Naive thymus-derived CD8-positive, alpha-beta T cell (primary cell): ENCODE measurements at regions of chr5 and their contacts with region 1.

Region 1: GRCh38 chr5:151223469-151224264 is at the start of gene CCDC69:
- DNase-seq: peak in 8 of 10 donors; percentile 26 to 69 (median 51)
- ATAC-seq: peak; percentile 64
- H3K4me3 Mint-ChIP-seq: peak within 1 kb of the TSS; percentile 82 to 96 (median 94)
- H3K27ac Mint-ChIP-seq: peak within 1 kb of the TSS; percentile 93 to 100 (median 96)
- H3K4me1 Mint-ChIP-seq: peaks cover 38 to 71% (median 57%) of the 10 kb centered on the region in 4 donors
- H3K27me3 Mint-ChIP-seq: no peaks in the 10 kb centered on the region
- polyA plus RNA-seq, gene CCDC69: 79.8 to 130 (median 98.1) TPM

Region 2: GRCh38 chr5:150700594-150701293 is 522.9 kb before region 1 on chr5 and contains the start of gene RBM22:
- POLR2A ChIA-PET with region 1: interaction called, 12 read pairs
- DNase-seq: peak; percentile 84 to 96 (median 92)
- ATAC-seq: peak; percentile 93 to 94
- H3K4me3 Mint-ChIP-seq: no peak within 1 kb of the TSS
- H3K27ac Mint-ChIP-seq: no peak within 1 kb of the TSS
- H3K4me1 Mint-ChIP-seq: peaks cover 0 to 7% (median under 1%) of the 10 kb centered on the region in 4 donors
- H3K27me3 Mint-ChIP-seq: no peaks in the 10 kb centered on the region
- polyA plus RNA-seq, gene RBM22: 51.4 to 57.0 (median 56.2) TPM

Region 3: GRCh38 chr5:151171529-151171928 is 52.1 kb before region 1 on chr5:
- POLR2A ChIA-PET with region 1: interaction called, 17 read pairs
- DNase-seq: no peak
- ATAC-seq: peak in 1 of 2 donors; percentile 17
- H3K4me3 Mint-ChIP-seq: no peak overlapping the region
- H3K27ac Mint-ChIP-seq: peak overlapping the region; percentile 63 to 93 (median 76)
- H3K4me1 Mint-ChIP-seq: peaks cover 17 to 44% (median 25%) of the 10 kb centered on the region in 4 donors
- H3K27me3 Mint-ChIP-seq: no peaks in the 10 kb centered on the region

Region 4: DNA sequence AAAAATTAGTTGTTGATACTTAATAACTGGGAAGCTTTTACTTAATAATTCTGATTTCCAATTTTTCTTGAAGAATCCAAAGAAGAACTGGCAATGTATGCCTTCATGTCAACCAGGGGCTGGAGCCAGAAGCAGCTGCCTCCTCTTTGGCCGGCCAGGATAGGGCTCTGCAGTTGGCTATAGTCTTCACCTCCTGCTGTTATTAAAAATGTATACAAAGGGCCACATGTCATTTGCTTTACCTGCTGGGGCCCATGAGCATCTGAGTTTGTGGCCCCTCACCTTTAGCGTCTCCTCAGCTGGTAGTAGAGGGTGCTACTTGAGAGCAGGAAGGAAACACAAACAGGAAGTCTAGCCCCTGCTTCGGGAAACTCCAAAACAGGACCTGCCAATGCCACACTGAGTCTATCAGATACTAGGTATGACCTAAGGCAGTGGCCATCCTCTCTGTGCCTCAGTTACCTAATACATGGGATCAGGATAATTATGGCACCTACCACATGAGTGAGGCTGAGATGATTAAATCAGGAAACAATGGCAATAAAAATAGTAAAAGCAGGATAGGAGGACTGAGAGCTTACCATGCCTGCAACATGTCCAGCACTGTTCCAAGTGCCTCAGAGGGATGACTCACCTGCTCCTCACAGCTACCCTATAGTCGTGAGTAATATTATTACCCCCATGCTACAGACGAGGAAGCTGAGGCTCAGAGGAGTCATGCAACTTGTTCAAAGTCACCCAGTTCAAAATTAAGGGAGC is 21.1 kb before region 1 on chr5:
- POLR2A ChIA-PET with region 1: interaction called, 65 read pairs
- DNase-seq: peak in 2 of 10 donors; percentile 14 to 27
- ATAC-seq: peak; percentile 76 to 93
- H3K4me3 Mint-ChIP-seq: peak overlapping the region in 9 of 10 donors; percentile 4 to 74 (median 58)
- H3K27ac Mint-ChIP-seq: peak overlapping the region; percentile 31 to 96 (median 88)
- H3K4me1 Mint-ChIP-seq: peaks cover 16 to 56% (median 45%) of the 10 kb centered on the region in 4 donors
- H3K27me3 Mint-ChIP-seq: no peaks in the 10 kb centered on the region

Region 5: GRCh38 chr5:151239237-151239861 is 15.7 kb after region 1 on chr5:
- POLR2A ChIA-PET with region 1: interaction called, 92 read pairs
- DNase-seq: peak in 6 of 10 donors; percentile 27 to 72 (median 56)
- ATAC-seq: peak; percentile 50 to 58
- H3K4me3 Mint-ChIP-seq: peak overlapping the region in 9 of 10 donors; percentile 30 to 82 (median 63)
- H3K27ac Mint-ChIP-seq: peak overlapping the region in 6 of 10 donors; percentile 11 to 84 (median 67)
- H3K4me1 Mint-ChIP-seq: peaks cover 20 to 57% (median 44%) of the 10 kb centered on the region in 4 donors
- H3K27me3 Mint-ChIP-seq: no peaks in the 10 kb centered on the region

Region 6: GRCh38 chr5:151771259-151772028 is 547.8 kb after region 1 on chr5 and contains the start of gene G3BP1:
- POLR2A ChIA-PET with region 1: interaction called, 10 read pairs
- DNase-seq: peak; percentile 92 to 100 (median 99)
- ATAC-seq: peak; percentile 77 to 79
- H3K4me3 Mint-ChIP-seq: peak within 1 kb of the TSS in 9 of 10 donors; percentile 83 to 98 (median 91)
- H3K27ac Mint-ChIP-seq: peak within 1 kb of the TSS in 8 of 10 donors; percentile 54 to 95 (median 92)
- H3K4me1 Mint-ChIP-seq: peaks cover 20 to 46% (median 45%) of the 10 kb centered on the region in 4 donors
- H3K27me3 Mint-ChIP-seq: no peaks in the 10 kb centered on the region
- polyA plus RNA-seq, gene G3BP1: 128 to 145 (median 145) TPM